Mucosa of descending colon (tissue), 3 donors: ENCODE measurements at regions of chr1 and their contacts with region 1.

Region 1: GRCh38 chr1:112698366-112699310 is 8.3 kb downstream of the RHOC start:
- DNase-seq: peak; percentile 85 to 92 (median 87)
- ATAC-seq: peak; percentile 83
- H3K4me3 ChIP-seq: no peak overlapping the region
- H3K4me1 ChIP-seq: peaks cover 40% of the 10 kb centered on the region
- CTCF ChIP-seq: no peak

Region 2: GRCh38 chr1:112674439-112674985 is 24.1 kb before region 1 on chr1 and contains the start of gene MOV10:
- intact Hi-C with region 1: loop called in 1 of 2 experiments (anchors 2 kb)
- DNase-seq: peak; percentile 80 to 85 (median 84)
- ATAC-seq: peak; percentile 81
- H3K4me3 ChIP-seq: peak within 1 kb of the TSS; percentile 71
- H3K4me1 ChIP-seq: peaks cover 9% of the 10 kb centered on the region
- CTCF ChIP-seq: no peak
- total RNA-seq, gene MOV10: 66.4 to 85.2 (median 77.6) TPM